Lower leg skin (tissue), 4 donors: ENCODE measurements at regions of chr11 and their contacts with region 1.

Region 1: DNA sequence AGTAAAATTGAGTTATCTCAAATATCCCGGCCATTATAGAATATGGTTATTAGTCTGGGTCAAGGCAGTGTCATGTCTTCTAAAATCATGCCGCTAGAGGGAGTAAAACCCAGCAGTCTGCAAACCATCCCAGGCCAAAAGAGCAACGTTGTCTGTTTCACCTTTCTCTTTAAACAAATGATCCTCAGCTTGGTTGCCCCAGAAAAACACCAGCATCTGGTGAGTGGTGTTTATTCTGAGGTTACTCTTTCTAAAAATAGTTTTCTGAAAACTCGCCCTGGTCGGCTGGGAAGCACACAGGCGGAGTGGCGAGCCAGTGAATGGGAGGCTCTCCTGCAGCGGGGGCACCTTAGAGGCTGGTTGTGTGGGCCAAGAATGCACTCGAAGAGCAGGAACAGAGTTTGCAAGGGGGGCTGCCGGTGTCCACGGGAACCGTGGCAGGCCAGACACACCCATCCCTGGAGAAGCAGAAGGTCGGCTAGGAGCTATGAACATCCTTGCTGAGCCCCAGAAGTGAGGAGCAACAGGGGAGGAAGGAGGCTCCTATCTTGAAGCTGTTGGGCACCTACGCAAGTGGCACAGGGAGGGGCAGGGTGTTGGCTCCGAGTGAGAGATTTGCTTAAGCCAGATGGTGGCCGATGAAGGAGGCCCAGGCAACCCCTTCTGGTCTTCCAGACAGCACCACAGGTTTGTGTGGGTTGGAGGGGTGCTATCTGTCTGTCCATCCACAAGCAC is 297.1 kb downstream of the ETS1 start:
- DNase-seq: peak; percentile 70 to 87
- H3K4me3 ChIP-seq: no peak overlapping the region
- CTCF ChIP-seq: peak in 1 of 3 donors; percentile 37
- POLR2A ChIP-seq: no peak

Region 2: GRCh38 chr11:128157423-128158298 is 132.6 kb before region 1 on chr11:
- intact Hi-C with region 1: loop called (anchors 5 kb)
- DNase-seq: peak in 1 of 2 donors; percentile 45
- H3K4me3 ChIP-seq: no peak overlapping the region
- CTCF ChIP-seq: peak in 1 of 3 donors; percentile 87
- POLR2A ChIP-seq: no peak

Region 3: GRCh38 chr11:128630367-128631230 is 340.3 kb after region 1 on chr11:
- intact Hi-C with region 1: loop called (anchors 2 kb)
- DNase-seq: peak; percentile 80 to 98
- H3K4me3 ChIP-seq: no peak overlapping the region
- CTCF ChIP-seq: peak in 1 of 3 donors; percentile 96
- POLR2A ChIP-seq: no peak